ENCODE measurements at regions of chr4 and their contacts with region 1.

Region 1: GRCh38 chr4:142405021-142405694 is 440.9 kb downstream of the INPP4B start:
- DNase-seq: peak; percentile 96
- H3K4me3 ChIP-seq: peak overlapping the region; percentile 49
- H3K27ac ChIP-seq: peak overlapping the region; percentile 69
- H3K4me1 ChIP-seq: peaks cover 66% of the 10 kb centered on the region
- H3K27me3 ChIP-seq: no peaks in the 10 kb centered on the region
- CTCF ChIP-seq: no peak

Region 2: DNA sequence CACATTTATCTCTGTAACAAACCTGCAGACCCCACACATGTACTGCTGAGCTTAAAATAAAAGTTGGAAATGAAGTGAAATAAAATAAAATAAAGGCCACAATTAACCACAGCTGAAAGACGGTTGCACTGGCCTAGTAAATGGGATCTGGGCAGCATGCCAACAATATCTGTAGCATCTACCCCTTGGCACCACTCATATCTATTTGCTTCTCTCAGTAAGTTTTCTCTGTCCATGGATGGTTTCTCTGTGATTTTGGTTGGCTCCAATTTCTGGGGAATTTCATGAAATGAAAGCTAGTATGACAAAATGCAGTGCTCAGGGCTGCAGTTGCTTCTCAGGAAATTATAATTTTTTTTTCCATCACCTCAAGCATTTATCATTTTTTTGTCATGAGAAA is 940.8 kb before region 1 on chr4:
- CTCF ChIA-PET with region 1: no interaction called
- POLR2A ChIA-PET with region 1: no interaction called
- intact Hi-C with region 1: no loop called
- DNase-seq: no peak
- H3K4me3 ChIP-seq: no peak overlapping the region
- H3K27ac ChIP-seq: no peak overlapping the region
- H3K4me1 ChIP-seq: no peaks in the 10 kb centered on the region
- H3K27me3 ChIP-seq: no peaks in the 10 kb centered on the region
- CTCF ChIP-seq: no peak

Region 3: DNA sequence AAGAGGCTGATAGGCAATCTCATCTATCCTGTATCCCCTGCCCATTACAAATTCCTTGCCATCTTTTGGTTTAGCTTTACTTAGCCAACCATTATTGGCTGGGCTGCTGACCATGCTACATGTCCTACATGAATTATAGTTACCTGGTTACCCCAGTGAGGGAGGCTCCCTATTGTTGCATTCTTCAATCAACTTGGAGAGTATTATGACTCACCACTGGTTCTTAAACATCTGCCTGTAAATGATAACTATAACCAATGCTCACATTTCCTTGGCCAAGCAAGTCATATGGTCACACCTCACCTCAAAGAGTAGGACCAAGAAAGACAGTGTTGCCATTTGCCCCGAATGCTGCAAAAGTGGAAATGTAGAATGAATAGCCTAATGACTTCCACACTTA is 471.2 kb before region 1 on chr4:
- CTCF ChIA-PET with region 1: no interaction called
- POLR2A ChIA-PET with region 1: interaction called, 12 read pairs
- intact Hi-C with region 1: no loop called
- DNase-seq: no peak
- H3K4me3 ChIP-seq: no peak overlapping the region
- H3K27ac ChIP-seq: no peak overlapping the region
- H3K4me1 ChIP-seq: no peaks in the 10 kb centered on the region
- H3K27me3 ChIP-seq: no peaks in the 10 kb centered on the region
- CTCF ChIP-seq: no peak

Region 4: GRCh38 chr4:142365387-142365786 is 39.8 kb before region 1 on chr4:
- CTCF ChIA-PET with region 1: no interaction called
- POLR2A ChIA-PET with region 1: no interaction called
- intact Hi-C with region 1: loop called (anchors 5 kb)
- DNase-seq: peak; percentile 55
- H3K4me3 ChIP-seq: no peak overlapping the region
- H3K27ac ChIP-seq: no peak overlapping the region
- H3K4me1 ChIP-seq: peaks cover 44% of the 10 kb centered on the region
- H3K27me3 ChIP-seq: no peaks in the 10 kb centered on the region
- CTCF ChIP-seq: no peak

Region 5: DNA sequence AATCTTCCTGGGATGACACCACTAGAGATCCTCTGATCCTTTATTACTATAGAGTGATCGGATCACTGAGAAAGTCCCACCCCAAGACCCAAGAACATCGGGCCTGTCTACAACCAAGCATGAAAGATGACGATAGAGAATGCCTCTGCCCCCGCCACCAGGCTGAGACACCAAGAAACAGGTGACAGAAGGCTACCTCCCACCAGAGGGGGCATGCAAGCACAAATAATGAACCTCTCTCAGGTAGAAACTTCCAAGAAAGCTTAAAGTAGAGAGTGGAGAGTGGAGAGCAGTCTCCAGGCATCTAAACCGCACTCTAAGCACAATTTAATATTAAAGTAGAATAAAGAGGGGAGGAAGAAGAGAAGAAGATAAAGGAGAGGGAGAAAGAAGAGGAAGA is 38.3 kb after region 1 on chr4:
- CTCF ChIA-PET with region 1: no interaction called
- POLR2A ChIA-PET with region 1: interaction called, 10 read pairs
- intact Hi-C with region 1: no loop called
- DNase-seq: no peak
- H3K4me3 ChIP-seq: no peak overlapping the region
- H3K27ac ChIP-seq: no peak overlapping the region
- H3K4me1 ChIP-seq: no peaks in the 10 kb centered on the region
- H3K27me3 ChIP-seq: no peaks in the 10 kb centered on the region
- CTCF ChIP-seq: no peak

Region 6: DNA sequence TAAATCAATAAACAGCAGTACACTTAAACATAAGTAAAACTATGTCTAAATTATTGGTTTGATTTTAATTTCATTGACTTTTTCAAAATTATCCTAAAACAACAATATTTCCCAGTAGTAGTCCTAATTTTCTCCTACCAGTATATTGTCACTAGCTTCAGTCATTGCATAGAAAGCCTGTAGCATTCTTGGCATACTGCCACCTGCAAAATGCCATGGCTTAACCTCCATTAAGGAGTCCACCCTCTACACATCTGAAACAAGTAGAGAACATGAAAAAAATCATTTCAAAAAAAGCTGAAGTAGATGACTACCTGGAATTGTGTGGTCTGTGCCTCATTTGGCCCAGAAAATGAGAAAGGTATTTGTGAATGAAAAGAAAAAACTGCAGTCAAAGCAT is 92.4 kb after region 1 on chr4:
- CTCF ChIA-PET with region 1: no interaction called
- POLR2A ChIA-PET with region 1: no interaction called
- intact Hi-C with region 1: no loop called
- DNase-seq: peak; percentile 47
- H3K4me3 ChIP-seq: no peak overlapping the region
- H3K27ac ChIP-seq: no peak overlapping the region
- H3K4me1 ChIP-seq: no peaks in the 10 kb centered on the region
- H3K27me3 ChIP-seq: no peaks in the 10 kb centered on the region
- CTCF ChIP-seq: no peak